ENCODE measurements at regions of chr17 and their contacts with region 1.

Region 1: DNA sequence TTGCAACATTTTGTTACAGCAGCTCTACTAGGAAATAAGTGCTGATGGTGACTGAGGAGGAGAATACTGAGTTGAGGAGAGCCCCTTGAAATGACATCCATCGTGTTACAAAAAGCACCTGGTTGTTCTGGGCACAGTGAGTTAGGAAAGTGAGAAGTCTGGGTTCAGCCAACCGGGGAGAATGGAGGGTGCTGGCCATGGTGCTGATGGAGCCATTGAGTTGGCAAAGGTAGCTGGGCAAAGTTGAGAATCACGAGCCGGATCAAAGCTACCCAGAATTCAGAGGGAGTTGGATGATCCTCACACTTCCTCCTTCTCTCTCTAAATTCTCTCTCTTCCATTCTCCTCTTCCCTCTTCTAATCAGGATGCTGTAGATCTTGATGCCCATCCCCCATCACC is 35.0 kb upstream of the ASIC2 start:
- DNase-seq: peak; percentile 4
- H3K4me3 Mint-ChIP-seq: no peak overlapping the region
- H3K27ac Mint-ChIP-seq: no peak overlapping the region
- H3K4me1 Mint-ChIP-seq: no peaks in the 10 kb centered on the region
- H3K27me3 Mint-ChIP-seq: peaks cover 34% of the 10 kb centered on the region
- CTCF ChIP-seq: no peak

Region 2: DNA sequence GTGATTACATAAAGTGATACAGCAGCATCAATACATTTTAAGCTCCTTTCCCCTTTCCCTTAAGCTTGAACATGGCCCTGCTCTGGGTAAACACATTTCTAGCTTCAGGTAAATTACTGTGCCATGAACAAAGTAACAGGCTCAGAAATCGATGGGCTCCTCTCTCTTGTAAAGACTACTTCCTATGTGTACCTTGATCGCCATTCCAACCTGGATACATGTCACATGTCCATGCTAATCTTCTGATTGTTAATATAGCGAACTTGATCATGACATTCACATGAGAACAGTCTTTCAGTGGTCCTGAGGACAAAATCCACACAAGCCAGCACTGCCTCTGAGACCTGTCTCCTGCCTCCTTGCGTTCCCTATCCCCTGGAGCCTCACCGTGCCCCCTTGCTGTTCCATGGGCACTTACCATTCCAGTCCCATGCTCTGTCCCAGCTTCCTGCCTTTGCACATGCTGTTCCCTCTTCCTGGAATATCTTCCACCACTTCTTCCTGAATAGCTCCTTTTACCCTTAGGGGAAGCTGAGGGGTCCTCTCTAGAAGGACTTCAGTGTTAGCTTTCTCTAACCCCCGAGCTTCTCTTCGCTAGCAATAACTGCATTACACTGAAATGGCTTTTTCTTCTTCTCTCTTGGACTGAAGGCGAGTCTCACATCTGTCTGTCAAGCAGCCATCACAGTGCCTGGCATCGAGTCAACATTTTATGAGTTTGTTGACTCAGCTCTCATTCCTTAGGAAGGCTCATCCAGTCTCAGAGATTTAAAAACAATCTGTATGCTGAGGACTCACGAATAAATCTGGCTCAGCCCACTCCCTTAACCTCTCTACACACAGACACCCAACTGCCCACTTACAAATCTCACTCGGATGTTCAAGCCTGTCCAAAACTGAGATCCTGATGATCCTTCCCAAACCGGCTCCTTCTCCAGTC is 128.3 kb before region 1 on chr17:
- CTCF ChIA-PET with region 1: no interaction called
- intact Hi-C with region 1: loop called (anchors 10 kb)
- DNase-seq: no peak
- H3K4me3 Mint-ChIP-seq: no peak overlapping the region
- H3K27ac Mint-ChIP-seq: no peak overlapping the region
- H3K4me1 Mint-ChIP-seq: no peaks in the 10 kb centered on the region
- H3K27me3 Mint-ChIP-seq: peaks cover 54% of the 10 kb centered on the region
- CTCF ChIP-seq: no peak